CD8-positive, alpha-beta T cell (primary cell): ENCODE measurements at regions of chr10 and their contacts with region 1.

Region 1: DNA sequence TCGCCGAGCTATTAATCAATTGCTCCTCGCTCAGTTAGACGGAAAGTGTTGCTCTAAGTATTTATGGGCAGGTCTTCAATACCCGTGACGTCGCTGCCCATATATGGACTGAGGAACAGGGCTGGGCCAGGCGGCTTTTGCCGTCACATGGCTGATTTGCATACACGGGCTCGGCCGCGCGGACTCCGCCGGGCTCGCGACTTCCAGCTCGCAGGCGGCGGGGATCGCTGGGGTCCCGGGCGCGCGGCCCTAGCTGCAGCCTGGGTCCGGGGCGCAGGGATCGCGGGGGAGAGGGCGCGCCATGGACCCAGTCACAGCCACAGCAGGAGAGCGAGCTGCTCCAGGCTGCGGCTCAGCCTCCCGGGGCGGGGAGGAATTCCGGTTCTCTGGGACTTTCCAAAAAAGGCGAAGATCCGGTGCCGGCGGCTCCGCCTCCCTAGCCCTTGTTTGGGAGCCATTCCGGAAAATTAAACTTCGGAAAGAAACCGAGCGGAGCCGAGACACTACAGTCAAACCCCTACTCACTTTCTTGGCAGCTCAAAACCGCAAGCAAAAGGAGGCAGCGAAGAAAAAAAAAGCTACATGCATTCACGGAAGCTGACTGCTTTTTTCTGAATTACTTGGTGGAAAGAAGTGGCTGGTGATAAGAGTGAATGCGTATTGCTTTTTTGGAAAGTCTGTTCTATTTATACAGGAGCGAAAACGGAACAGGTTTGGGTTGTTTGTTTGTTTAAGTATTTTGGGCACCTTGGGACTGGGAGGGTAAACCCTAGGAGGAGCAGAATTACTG is at the start of gene EGR2:
- DNase-seq: peak; percentile 90 to 98 (median 95)
- ATAC-seq: peak; percentile 82
- H3K4me3 ChIP-seq: peak within 1 kb of the TSS; percentile 74 to 85
- H3K4me3 Mint-ChIP-seq: peak within 1 kb of the TSS; percentile 98
- H3K27ac ChIP-seq: peak within 1 kb of the TSS; percentile 73 to 80
- H3K27ac Mint-ChIP-seq: peak within 1 kb of the TSS; percentile 98
- H3K4me1 ChIP-seq: peaks cover 35% of the 10 kb centered on the region
- H3K4me1 Mint-ChIP-seq: peaks cover 45% of the 10 kb centered on the region
- H3K27me3 ChIP-seq: peaks cover 6 to 10% of the 10 kb centered on the region in 2 experiments
- H3K27me3 Mint-ChIP-seq: peaks cover 27% of the 10 kb centered on the region
- CTCF ChIP-seq: no peak
- total RNA-seq, gene EGR2: 5.6 to 6.1 TPM

Region 2: DNA sequence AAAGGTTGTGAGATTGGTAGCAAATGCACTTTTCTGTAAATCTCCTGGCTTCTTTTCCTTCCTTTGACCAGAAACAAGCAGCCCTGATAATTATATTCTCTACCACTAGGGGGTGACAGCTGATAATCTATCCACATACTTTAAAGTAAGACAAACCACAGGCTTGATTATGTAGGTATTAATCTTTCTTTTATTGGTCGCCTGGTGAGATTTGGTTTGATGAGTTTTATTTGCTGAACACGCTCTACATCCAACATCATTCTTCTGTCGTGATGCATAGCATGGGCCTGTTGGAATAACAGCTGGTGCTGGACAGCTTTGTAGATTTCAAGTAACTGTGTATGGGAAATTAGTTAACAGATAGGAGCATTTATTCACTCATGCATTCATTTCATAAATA is 378.8 kb before region 1 on chr10:
- CTCF ChIA-PET with region 1: interaction called, 18 read pairs
- POLR2A ChIA-PET with region 1: no interaction called
- intact Hi-C with region 1: loop called in 1 of 2 experiments (anchors 1 kb)
- DNase-seq: peak in 3 of 9 experiments; percentile 20 to 72 (median 65)
- ATAC-seq: peak; percentile 66
- H3K4me3 ChIP-seq: no peak overlapping the region
- H3K4me3 Mint-ChIP-seq: no peak overlapping the region
- H3K27ac ChIP-seq: no peak overlapping the region
- H3K27ac Mint-ChIP-seq: no peak overlapping the region
- H3K4me1 ChIP-seq: no peaks in the 10 kb centered on the region
- H3K4me1 Mint-ChIP-seq: no peaks in the 10 kb centered on the region
- H3K27me3 ChIP-seq: no peaks in the 10 kb centered on the region
- H3K27me3 Mint-ChIP-seq: peaks cover 6% of the 10 kb centered on the region
- CTCF ChIP-seq: peak; percentile 95

Region 3: DNA sequence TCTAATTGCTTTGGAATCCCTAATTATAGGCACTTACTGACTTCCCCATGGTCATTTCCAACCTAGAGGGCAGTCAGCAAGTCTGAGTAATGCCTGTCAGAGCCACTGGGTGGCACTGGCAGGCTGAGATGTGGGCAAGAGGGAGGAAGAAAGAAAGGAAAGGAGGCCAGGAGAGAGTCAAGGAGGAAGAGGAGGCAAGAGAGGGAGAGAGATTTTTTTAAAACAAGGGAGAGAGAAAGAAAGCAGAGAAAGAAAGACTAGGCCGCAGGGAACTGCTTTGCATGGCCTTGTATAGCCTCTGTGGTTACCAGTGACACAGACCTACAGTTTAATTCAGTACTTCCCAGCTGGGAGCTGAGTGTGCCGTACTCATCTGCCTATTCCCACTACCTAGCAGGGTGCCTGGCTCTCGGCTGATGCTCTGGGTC is 222.4 kb before region 1 on chr10:
- CTCF ChIA-PET with region 1: interaction called, 23 read pairs
- POLR2A ChIA-PET with region 1: interaction called, 4 read pairs
- intact Hi-C with region 1: loop called in 1 of 2 experiments (anchors 5 kb)
- DNase-seq: peak; percentile 10 to 70 (median 42)
- ATAC-seq: peak; percentile 65
- H3K4me3 ChIP-seq: no peak overlapping the region
- H3K4me3 Mint-ChIP-seq: no peak overlapping the region
- H3K27ac ChIP-seq: no peak overlapping the region
- H3K27ac Mint-ChIP-seq: no peak overlapping the region
- H3K4me1 ChIP-seq: no peaks in the 10 kb centered on the region
- H3K4me1 Mint-ChIP-seq: no peaks in the 10 kb centered on the region
- H3K27me3 ChIP-seq: no peaks in the 10 kb centered on the region
- H3K27me3 Mint-ChIP-seq: no peaks in the 10 kb centered on the region
- CTCF ChIP-seq: peak; percentile 97

Region 4: DNA sequence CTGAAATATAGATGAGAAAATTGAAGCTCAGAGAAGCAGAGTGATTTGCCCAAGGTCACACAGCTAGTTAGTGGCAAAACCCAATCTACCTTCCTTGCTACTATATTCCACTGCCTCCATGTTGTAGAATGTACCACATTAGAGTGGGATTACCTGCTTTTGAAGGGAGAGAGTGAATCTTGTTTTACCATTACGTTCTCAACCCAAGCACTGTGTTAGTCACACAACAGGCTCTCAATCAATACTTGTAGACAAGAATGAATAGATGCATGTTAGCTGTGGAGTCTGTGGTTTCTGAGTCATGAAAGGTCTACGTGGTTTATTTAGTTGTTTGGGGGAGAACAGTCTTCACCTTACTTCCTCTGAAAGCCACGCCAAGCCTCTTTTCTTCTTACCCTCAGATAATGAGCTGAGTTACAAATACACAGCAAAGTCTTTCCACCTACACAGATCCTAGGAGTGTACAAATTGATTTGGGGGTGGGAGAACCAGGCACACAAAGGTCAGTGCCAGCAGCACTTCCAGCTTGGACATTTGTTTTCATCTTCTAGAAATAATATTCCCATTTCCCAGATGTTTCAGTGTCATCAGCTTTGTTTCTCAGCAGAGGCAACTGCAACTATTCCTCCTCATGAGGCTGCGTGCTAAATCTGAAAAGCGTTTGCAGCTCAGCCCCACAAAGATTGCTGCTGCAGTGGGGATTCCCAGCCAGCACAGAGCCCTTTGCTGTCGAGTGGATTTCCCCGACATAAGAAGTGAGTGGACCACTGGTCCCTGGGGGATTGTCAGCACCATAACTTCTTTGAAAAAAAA is 83.5 kb before region 1 on chr10:
- CTCF ChIA-PET with region 1: interaction called, 26 read pairs
- POLR2A ChIA-PET with region 1: interaction called, 9 read pairs
- intact Hi-C with region 1: loop called (anchors 1 to 2 kb)
- DNase-seq: peak in 8 of 9 experiments; percentile 33 to 92 (median 64)
- ATAC-seq: peak; percentile 88
- H3K4me3 ChIP-seq: peak overlapping the region in 1 of 2 experiments; percentile 10
- H3K4me3 Mint-ChIP-seq: peak overlapping the region; percentile 1
- H3K27ac ChIP-seq: peak overlapping the region in 1 of 2 experiments; percentile 17
- H3K27ac Mint-ChIP-seq: no peak overlapping the region
- H3K4me1 ChIP-seq: peaks cover 35% of the 10 kb centered on the region
- H3K4me1 Mint-ChIP-seq: peaks cover 6% of the 10 kb centered on the region
- H3K27me3 ChIP-seq: peaks cover 0 to 2% of the 10 kb centered on the region in 2 experiments
- H3K27me3 Mint-ChIP-seq: peaks cover 2% of the 10 kb centered on the region
- CTCF ChIP-seq: no peak

Region 5: DNA sequence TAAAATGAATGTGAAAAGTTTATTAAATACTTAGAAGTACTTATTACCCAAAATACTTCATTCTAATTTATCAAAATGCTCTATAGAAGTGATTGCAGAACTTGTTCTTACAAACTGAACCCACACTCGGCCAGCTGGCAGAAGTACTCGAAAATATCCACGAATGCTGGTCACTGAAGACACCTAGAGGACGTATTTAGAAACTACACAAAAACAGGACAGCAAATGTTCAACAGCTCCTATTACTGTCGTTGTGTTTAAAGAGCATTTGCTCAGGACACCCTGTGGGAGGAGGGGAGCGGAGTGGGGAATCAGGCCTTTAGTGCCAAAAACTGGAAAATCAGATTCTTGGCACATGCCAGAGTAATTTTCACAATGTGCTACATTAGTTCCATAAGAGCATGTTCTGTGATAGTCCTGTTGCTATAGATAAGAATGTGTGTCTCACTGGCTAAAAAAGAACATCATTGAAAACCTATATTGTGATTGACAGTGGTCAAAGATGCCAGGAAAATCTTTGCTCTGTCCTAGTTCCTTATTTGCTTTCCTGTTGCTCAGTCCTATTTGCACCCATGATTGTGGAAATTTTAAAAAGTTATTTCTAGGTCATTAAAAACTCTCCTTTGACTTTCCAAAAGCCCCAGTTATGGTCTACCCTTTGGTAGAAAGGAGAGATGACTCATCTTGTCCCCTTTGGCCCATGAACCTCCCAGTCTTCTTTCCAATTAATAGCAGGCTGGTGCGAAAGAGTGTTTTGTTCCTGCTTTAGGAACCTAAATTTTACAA is 267.6 kb after region 1 on chr10:
- CTCF ChIA-PET with region 1: interaction called, 7 read pairs
- POLR2A ChIA-PET with region 1: no interaction called
- intact Hi-C with region 1: loop called in 1 of 2 experiments (anchors 10 kb)
- DNase-seq: peak in 8 of 9 experiments; percentile 7 to 76 (median 40)
- ATAC-seq: peak; percentile 51
- H3K4me3 ChIP-seq: no peak overlapping the region
- H3K4me3 Mint-ChIP-seq: no peak overlapping the region
- H3K27ac ChIP-seq: no peak overlapping the region
- H3K27ac Mint-ChIP-seq: no peak overlapping the region
- H3K4me1 ChIP-seq: no peaks in the 10 kb centered on the region
- H3K4me1 Mint-ChIP-seq: no peaks in the 10 kb centered on the region
- H3K27me3 ChIP-seq: no peaks in the 10 kb centered on the region
- H3K27me3 Mint-ChIP-seq: peaks cover 9% of the 10 kb centered on the region
- CTCF ChIP-seq: peak; percentile 77

Region 6: GRCh38 chr10:63629363-63630084 is 813.0 kb after region 1 on chr10:
- CTCF ChIA-PET with region 1: no interaction called
- POLR2A ChIA-PET with region 1: no interaction called
- intact Hi-C with region 1: loop called in 1 of 2 experiments (anchors 10 kb)
- DNase-seq: peak; percentile 52 to 85 (median 80)
- ATAC-seq: peak; percentile 62
- H3K4me3 ChIP-seq: peak overlapping the region; percentile 71 to 81
- H3K4me3 Mint-ChIP-seq: peak overlapping the region; percentile 97
- H3K27ac ChIP-seq: peak overlapping the region; percentile 31 to 45
- H3K27ac Mint-ChIP-seq: peak overlapping the region; percentile 91
- H3K4me1 ChIP-seq: peaks cover 20% of the 10 kb centered on the region
- H3K4me1 Mint-ChIP-seq: peaks cover 29% of the 10 kb centered on the region
- H3K27me3 ChIP-seq: no peaks in the 10 kb centered on the region
- H3K27me3 Mint-ChIP-seq: no peaks in the 10 kb centered on the region
- CTCF ChIP-seq: peak; percentile 87